Heart right ventricle (tissue), 16 donors: ENCODE measurements at regions of chr10 and their contacts with region 1.

Region 1: DNA sequence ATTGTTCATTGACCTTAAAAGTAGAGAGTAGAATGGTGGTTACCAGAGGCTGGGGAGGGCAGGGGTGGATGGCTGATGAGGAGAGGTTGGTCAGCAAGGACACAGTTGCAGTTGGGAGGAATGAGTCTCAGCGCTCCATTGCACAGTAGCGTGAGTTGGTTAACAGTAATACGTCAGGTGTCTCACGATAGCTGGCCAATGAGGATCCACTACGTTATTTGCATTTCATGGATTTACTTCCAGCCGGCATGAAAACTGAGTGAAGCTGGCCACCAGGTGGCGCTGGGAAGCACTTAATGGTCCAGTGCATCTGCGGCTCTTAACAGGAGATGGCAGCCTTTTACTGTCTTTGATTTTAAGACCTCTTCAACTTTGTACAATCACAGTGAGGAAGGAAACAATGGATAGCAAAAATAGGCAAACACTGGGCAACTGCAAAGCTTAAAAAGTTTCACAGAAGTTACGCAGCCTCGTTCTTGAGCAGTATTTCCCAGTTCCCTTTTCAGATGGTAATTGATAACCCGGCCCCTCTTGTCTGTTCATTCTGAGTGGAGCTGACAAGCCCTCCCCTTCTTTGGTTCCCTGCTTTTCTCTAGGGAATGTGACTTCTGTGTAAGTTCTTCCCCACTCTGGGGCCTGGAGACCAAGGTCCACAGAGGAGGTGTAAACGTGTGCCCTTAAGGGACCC is 23.7 kb downstream of the AKR1E2 start:
- DNase-seq: peak; percentile 90 to 91
- ATAC-seq: peak; percentile 86 to 95 (median 90)
- H3K4me3 ChIP-seq: peak overlapping the region in 1 of 10 donors; percentile 3
- H3K27ac ChIP-seq: peak overlapping the region in 7 of 10 donors; percentile 17 to 68 (median 55)
- H3K4me1 ChIP-seq: peaks cover 5 to 45% (median 28%) of the 10 kb centered on the region in 9 donors
- H3K27me3 ChIP-seq: no peaks in the 10 kb centered on the region
- CTCF ChIP-seq: peak; percentile 96 to 100 (median 98)

Region 2: DNA sequence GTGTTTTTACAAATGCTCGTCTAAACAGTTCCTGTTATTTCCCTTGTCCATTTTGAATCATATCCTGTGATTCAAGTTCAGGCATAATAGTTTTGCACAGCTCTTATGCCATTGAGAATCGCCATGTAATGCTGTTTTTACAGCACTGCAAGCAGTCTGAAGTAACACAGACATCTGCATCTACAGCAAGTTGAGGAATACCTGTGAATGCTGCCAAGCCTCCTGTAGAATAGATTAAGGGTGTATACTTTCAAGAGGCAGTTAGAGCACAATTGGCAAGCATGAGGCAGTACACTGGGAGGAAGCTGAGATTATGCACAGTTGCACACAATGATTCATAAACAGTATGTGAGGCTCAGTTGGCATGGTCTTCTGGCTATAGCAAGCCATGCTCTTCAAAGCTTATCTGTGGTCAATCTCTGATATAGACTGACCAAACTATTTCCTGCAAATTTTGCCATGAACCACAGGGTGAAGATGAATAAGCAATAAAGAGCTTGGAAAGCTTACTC is 145.6 kb before region 1 on chr10:
- intact Hi-C with region 1: no loop called
- DNase-seq: peak in 1 of 2 donors; percentile 61
- ATAC-seq: peak; percentile 80 to 97 (median 92)
- H3K4me3 ChIP-seq: no peak overlapping the region
- H3K27ac ChIP-seq: peak overlapping the region in 9 of 10 donors; percentile 28 to 78 (median 72)
- H3K4me1 ChIP-seq: peaks cover 0 to 30% (median 16%) of the 10 kb centered on the region in 9 donors
- H3K27me3 ChIP-seq: peaks cover 0 to 4% (median 0%) of the 10 kb centered on the region in 7 donors
- CTCF ChIP-seq: no peak

Region 3: DNA sequence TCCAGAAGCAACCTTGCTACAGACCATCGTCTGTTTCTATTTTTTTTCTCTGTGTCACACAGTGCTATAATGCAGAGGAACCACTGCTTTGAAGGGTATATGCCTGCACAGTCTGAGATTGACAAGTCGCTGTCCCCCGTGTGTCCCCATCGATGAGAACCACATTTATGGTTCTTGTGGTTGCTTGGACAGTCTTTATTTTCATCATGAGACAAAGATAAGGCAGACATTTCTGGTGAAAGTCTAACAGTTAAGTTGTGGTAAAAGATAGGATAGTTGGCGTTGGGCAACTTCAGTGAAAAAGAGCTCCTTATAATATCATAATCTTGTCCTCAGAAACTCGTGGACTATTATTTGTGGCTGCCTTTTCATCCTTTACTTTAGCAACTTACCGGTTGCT is 30.0 kb before region 1 on chr10:
- intact Hi-C with region 1: loop called in 1 of 10 experiments (anchors 2 kb)
- DNase-seq: no peak
- ATAC-seq: no peak
- H3K4me3 ChIP-seq: no peak overlapping the region
- H3K27ac ChIP-seq: no peak overlapping the region
- H3K4me1 ChIP-seq: peaks cover 0 to 10% (median 0%) of the 10 kb centered on the region in 9 donors
- H3K27me3 ChIP-seq: no peaks in the 10 kb centered on the region
- CTCF ChIP-seq: no peak

Region 4: GRCh38 chr10:4888236-4888635 is 38.5 kb after region 1 on chr10:
- intact Hi-C with region 1: no loop called
- DNase-seq: no peak
- ATAC-seq: no peak
- H3K4me3 ChIP-seq: no peak overlapping the region
- H3K27ac ChIP-seq: peak overlapping the region in 1 of 10 donors; percentile 3
- H3K4me1 ChIP-seq: peaks cover 0 to 2% (median 0%) of the 10 kb centered on the region in 9 donors
- H3K27me3 ChIP-seq: no peaks in the 10 kb centered on the region
- CTCF ChIP-seq: no peak

Region 5: GRCh38 chr10:4981722-4982471 is 132.2 kb after region 1 on chr10:
- intact Hi-C with region 1: loop called in 7 of 10 experiments (anchors 2 to 10 kb)
- DNase-seq: peak in 1 of 2 donors; percentile 30
- ATAC-seq: peak in 7 of 8 donors; percentile 51 to 71 (median 63)
- H3K4me3 ChIP-seq: no peak overlapping the region
- H3K27ac ChIP-seq: peak overlapping the region in 6 of 10 donors; percentile 2 to 62 (median 15)
- H3K4me1 ChIP-seq: peaks cover 4 to 27% (median 11%) of the 10 kb centered on the region in 9 donors
- H3K27me3 ChIP-seq: no peaks in the 10 kb centered on the region
- CTCF ChIP-seq: peak in 8 of 9 donors; percentile 20 to 64 (median 57)

Region 6: DNA sequence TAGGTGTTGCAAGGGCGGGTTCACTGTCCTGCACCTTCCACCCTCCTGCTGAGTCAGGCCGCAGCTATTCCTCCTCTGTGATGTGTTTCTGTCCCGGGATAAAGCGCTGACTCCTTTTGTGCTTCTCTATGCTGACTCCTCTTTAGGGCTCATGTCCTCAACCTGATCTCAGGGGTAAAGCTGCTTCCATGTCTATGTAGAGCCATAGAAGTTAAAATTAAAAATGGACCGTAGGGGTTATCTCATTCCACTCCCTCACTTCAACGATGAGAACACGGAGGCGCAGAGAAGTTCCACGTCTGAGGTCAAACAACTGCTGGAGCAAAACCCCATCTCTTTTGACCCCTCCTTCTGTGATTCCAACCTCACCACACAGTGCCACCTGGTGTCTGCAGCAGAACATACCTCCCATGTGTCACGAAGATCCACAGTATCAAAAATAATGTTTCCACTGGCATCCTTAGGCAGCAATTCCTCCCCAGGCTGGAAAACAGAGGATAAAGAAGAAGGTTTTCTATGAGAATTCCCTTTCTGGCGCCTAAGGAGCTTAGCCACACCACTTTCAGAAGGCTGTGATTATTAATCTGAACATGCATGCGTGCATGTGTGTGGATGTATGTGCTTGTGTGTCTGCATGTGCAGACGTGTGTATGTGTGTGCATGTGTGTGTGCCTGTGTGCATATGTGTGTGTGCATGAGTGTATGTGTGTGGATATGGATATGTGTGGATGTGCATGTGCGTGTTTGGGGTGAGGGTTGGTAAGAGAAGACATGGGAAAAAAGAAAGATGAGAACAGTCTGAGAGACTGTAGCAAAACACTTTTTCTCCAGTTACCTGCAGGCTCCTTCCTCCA is 433.8 kb after region 1 on chr10:
- intact Hi-C with region 1: loop called (anchors 1 to 5 kb)
- DNase-seq: peak; percentile 55 to 67
- ATAC-seq: peak; percentile 81 to 94 (median 88)
- H3K4me3 ChIP-seq: no peak overlapping the region
- H3K27ac ChIP-seq: peak overlapping the region in 1 of 10 donors; percentile 76
- H3K4me1 ChIP-seq: peaks cover 0 to 26% (median 0%) of the 10 kb centered on the region in 9 donors
- H3K27me3 ChIP-seq: peaks cover 0 to 4% (median 0%) of the 10 kb centered on the region in 7 donors
- CTCF ChIP-seq: peak; percentile 33 to 77 (median 68)

Region 7: DNA sequence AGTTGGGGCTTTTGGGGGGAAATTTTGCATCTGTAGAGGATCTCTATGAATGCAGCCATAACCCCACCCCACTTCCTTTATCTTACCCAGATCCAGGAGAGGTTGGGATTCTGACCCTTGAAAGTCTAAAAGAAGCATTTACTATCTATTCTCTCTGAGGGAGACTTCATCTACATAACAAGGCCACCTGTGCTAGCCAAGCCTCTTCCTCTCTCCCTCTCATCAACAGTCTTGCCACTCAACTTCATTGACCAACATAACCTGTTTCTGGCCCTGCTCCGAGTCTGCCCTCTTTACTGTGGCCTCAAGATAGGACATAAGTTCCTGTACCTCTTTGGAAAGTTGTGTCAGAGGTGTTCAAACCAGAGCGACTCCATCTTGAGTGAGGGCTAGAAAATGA is 535.5 kb after region 1 on chr10:
- intact Hi-C with region 1: loop called in 8 of 10 experiments (anchors 5 to 10 kb)
- DNase-seq: no peak
- ATAC-seq: no peak
- H3K4me3 ChIP-seq: no peak overlapping the region
- H3K27ac ChIP-seq: no peak overlapping the region
- H3K4me1 ChIP-seq: peaks cover 0 to 4% (median 0%) of the 10 kb centered on the region in 9 donors
- H3K27me3 ChIP-seq: no peaks in the 10 kb centered on the region
- CTCF ChIP-seq: no peak

Region 8: DNA sequence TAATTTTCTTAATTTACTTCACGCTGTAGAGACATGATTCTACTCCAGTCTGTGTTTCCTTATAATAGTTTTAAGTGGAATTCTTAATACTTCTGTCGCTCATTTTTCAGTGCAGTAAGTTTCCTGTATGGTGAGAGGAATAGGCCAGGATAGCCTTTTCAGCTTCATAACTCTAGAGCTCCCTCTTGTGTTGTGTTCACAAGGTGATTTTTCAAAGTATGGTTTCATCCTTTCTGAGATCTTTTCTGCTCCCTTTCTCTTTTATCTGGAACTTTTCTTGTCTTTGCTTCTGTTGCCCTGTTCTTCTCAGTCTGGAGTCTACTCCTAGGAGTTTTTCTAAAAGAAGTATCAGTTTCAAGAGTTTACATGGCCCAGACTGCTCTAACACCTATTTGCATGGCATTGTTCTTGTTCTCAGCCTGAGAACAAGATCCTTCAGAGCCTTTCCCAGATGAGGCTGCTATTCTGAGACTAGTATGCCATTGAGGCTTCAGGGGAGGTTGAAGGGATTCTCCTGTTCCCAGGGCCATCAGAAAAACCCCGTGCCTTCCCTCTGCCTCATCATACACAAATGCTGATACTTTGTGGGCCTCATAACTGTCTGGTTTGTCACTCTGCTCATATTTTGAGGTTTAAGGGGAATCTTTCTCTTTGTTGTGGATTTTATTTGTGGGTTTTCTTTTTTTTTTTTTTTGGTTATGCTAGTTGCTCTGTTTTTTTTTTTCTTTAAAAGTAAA is 584.5 kb after region 1 on chr10:
- intact Hi-C with region 1: loop called in 8 of 10 experiments (anchors 1 to 10 kb)
- DNase-seq: no peak
- ATAC-seq: peak in 3 of 8 donors; percentile 59 to 68 (median 61)
- H3K4me3 ChIP-seq: no peak overlapping the region
- H3K27ac ChIP-seq: no peak overlapping the region
- H3K4me1 ChIP-seq: no peaks in the 10 kb centered on the region
- H3K27me3 ChIP-seq: no peaks in the 10 kb centered on the region
- CTCF ChIP-seq: peak; percentile 26 to 79 (median 71)